ENCODE measurements at regions of chr2 and their contacts with region 1.

Region 1: GRCh38 chr2:47520825-47521665 is 118.1 kb downstream of the MSH2 start:
- DNase-seq: peak; percentile 85
- H3K4me3 Mint-ChIP-seq: peak overlapping the region; percentile 84
- H3K27ac Mint-ChIP-seq: peak overlapping the region; percentile 93
- H3K4me1 Mint-ChIP-seq: peaks cover 34% of the 10 kb centered on the region
- H3K27me3 Mint-ChIP-seq: no peaks in the 10 kb centered on the region

Region 2: DNA sequence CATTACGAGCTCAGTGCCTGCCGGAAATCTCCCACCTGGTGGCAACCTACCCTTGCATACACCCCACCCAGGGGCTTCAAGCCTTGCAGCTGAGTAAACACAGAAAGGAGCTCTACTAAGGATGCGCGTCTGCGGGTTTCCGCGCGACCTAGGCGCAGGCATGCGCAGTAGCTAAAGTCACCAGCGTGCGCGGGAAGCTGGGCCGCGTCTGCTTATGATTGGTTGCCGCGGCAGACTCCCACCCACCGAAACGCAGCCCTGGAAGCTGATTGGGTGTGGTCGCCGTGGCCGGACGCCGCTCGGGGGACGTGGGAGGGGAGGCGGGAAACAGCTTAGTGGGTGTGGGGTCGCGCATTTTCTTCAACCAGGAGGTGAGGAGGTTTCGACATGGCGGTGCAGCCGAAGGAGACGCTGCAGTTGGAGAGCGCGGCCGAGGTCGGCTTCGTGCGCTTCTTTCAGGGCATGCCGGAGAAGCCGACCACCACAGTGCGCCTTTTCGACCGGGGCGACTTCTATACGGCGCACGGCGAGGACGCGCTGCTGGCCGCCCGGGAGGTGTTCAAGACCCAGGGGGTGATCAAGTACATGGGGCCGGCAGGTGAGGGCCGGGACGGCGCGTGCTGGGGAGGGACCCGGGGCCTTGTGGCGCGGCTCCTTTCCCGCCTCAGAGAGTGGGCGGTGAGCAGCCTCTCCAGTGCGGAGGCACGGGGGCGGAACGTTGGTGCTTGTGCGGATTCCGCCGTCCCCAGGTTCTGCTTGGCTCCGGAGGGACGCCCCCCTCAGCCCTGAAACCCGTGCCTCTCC is 118.0 kb before region 1 on chr2 and contains the start of gene MSH2:
- CTCF ChIA-PET with region 1: interaction called, 9 read pairs
- POLR2A ChIA-PET with region 1: interaction called, 15 read pairs
- DNase-seq: peak; percentile 93
- H3K4me3 Mint-ChIP-seq: peak within 1 kb of the TSS; percentile 94
- H3K27ac Mint-ChIP-seq: peak within 1 kb of the TSS; percentile 82
- H3K4me1 Mint-ChIP-seq: peaks cover 39% of the 10 kb centered on the region
- H3K27me3 Mint-ChIP-seq: no peaks in the 10 kb centered on the region
- total RNA-seq, gene MSH2: 39.0 to 39.3 TPM

Region 3: GRCh38 chr2:47501374-47502200 is 19.5 kb before region 1 on chr2:
- CTCF ChIA-PET with region 1: interaction called, 4 read pairs
- POLR2A ChIA-PET with region 1: interaction called, 18 read pairs
- DNase-seq: peak; percentile 44
- H3K4me3 Mint-ChIP-seq: peak overlapping the region; percentile 18
- H3K27ac Mint-ChIP-seq: peak overlapping the region; percentile 84
- H3K4me1 Mint-ChIP-seq: peaks cover 28% of the 10 kb centered on the region
- H3K27me3 Mint-ChIP-seq: peaks cover 4% of the 10 kb centered on the region

Region 4: DNA sequence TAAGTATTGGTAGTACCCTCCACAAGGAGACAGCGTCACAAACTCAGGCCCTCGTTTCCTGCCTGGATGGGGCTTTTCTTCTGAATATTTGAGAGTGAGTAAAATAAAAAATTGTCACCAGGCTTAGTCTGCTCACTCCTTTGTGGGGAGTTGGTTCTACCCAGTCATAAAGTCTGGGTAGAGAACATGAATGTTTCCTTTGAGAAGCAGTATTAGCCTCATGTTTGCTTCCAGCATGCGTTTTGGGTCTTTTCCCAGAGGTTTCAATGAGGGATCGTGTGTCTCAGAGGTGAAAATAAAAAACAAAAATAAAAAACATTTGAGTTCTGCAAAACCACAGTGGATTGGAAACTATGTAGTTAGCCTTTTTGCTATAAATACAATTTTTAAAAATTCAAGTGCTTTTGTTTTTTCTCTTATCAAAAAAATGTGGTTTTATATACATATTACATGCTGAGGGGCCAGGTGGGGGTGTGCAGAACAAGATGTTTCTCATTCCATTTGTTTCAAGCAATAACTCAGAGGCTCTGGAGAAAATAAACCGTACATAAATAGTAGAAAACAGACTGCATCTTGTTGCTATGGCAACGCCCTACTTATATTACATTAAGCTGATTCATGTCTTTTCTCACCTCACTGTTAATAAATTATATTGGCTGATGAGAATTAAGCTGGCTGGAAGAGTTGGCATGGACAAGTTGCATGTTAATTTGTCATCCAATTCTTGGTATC is 610.7 kb after region 1 on chr2:
- CTCF ChIA-PET with region 1: no interaction called
- POLR2A ChIA-PET with region 1: no interaction called
- DNase-seq: no peak
- H3K4me3 Mint-ChIP-seq: no peak overlapping the region
- H3K27ac Mint-ChIP-seq: no peak overlapping the region
- H3K4me1 Mint-ChIP-seq: no peaks in the 10 kb centered on the region
- H3K27me3 Mint-ChIP-seq: no peaks in the 10 kb centered on the region

Measured in activated CD4-positive, alpha-beta memory T cell treated with anti-CD3 and anti-CD28 coated beads, Interleukin-2, amount 10 ng/mL, durations not matched to agents 7 days and 5 days (primary cell).